Heart left ventricle (tissue), 16 donors: ENCODE measurements at regions of chr5 and their contacts with region 1.

Region 1: GRCh38 chr5:1041225-1042129 is 32.9 kb downstream of the NKD2 start:
- DNase-seq: no peak
- ATAC-seq: no peak
- H3K4me3 ChIP-seq: no peak overlapping the region
- H3K27ac ChIP-seq: no peak overlapping the region
- H3K4me1 ChIP-seq: no peaks in the 10 kb centered on the region
- H3K27me3 ChIP-seq: no peaks in the 10 kb centered on the region
- CTCF ChIP-seq: no peak
- POLR2A ChIP-seq: no peak

Region 2: DNA sequence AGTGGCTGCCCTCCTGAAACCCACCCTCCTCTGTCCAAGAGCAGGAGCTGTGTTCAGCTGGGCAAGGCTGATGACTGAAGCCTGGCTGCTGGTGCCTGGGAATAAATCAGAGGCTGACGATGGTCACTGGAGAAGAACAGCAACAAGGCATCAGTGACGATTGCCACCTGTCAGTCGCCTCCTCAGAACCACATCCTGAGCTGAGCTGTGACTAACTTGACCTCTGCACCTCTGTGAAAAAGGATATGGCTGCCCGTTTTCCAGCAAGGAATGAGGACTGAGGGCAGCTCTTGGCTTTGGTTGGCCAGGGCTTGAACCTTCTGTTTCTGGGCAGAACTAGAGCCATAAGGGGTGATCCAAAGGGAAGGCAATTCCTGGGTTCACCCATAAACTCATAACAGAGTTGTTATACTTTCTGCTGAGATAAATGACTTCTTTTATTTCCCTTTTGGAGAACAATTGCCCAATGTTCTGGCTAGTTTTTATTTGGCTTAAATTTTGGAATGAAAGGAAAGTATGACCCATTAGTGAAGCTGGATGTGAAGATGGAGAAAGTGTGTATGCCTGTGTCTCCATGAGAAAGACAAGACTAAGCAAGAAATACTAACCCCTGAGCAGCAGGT is 108.7 kb before region 1 on chr5:
- intact Hi-C with region 1: loop called in 1 of 10 experiments (anchors 5 kb)
- DNase-seq: no peak
- ATAC-seq: peak in 3 of 4 donors; percentile 52 to 71 (median 58)
- H3K4me3 ChIP-seq: no peak overlapping the region
- H3K27ac ChIP-seq: peak overlapping the region in 6 of 12 donors; percentile 9 to 61 (median 32)
- H3K4me1 ChIP-seq: no peaks in the 10 kb centered on the region
- H3K27me3 ChIP-seq: peaks cover 0 to 3% (median 0%) of the 10 kb centered on the region in 9 donors
- CTCF ChIP-seq: no peak
- POLR2A ChIP-seq: no peak